CD4-positive, alpha-beta T cell (primary cell): ENCODE measurements at regions of chr1 and their contacts with region 1.

Region 1: DNA sequence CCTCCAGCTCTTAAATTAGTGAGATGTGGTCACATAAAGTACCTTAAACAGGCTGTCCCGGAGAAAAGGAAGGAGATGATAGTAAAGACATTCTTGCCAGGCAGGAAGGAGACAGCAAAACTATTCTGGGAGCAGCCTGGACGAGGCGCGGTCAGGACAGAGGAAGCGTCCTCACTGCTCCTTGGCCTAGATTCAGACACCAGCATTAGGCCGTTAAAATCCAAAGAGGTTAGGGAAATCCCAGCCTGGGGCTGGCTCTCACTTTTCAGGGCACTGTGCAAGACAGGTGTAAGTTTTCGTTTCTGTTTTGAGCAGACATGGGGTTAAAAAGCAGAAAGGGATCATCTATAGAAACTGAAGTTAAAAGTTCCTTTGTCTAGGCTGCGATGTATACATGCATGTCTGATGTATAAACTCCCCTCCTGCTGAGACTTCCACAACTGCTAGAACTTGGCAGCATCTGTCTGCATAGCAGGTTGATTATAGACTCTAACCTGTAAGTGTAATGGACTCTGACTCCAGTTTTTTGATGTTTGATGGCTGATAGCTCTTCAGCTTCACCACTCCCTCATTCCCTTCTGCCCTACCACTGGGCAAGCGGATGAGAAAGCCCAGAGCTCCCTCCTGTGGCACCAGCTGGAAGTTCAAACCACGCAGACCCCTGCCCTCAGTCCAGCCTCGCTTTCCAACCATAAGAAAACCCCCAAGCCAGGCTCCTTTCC is 21.5 kb downstream of the STPG1 start:
- DNase-seq: peak; percentile 44 to 84 (median 55)
- ATAC-seq: peak; percentile 79
- H3K4me3 ChIP-seq: peak overlapping the region; percentile 32
- H3K4me3 Mint-ChIP-seq: peak overlapping the region; percentile 52
- H3K27ac ChIP-seq: peak overlapping the region; percentile 63 to 78
- H3K27ac Mint-ChIP-seq: peak overlapping the region; percentile 85
- H3K4me1 ChIP-seq: peaks cover 29% of the 10 kb centered on the region
- H3K4me1 Mint-ChIP-seq: peaks cover 42% of the 10 kb centered on the region
- H3K27me3 ChIP-seq: no peaks in the 10 kb centered on the region
- H3K27me3 Mint-ChIP-seq: no peaks in the 10 kb centered on the region
- CTCF ChIP-seq: peak; percentile 75

Region 2: GRCh38 chr1:24070821-24071393 is 321.1 kb before region 1 on chr1:
- CTCF ChIA-PET with region 1: no interaction called
- POLR2A ChIA-PET with region 1: no interaction called
- intact Hi-C with region 1: loop called in 1 of 2 experiments (anchors 5 kb)
- DNase-seq: peak; percentile 52 to 83 (median 61)
- ATAC-seq: peak; percentile 88
- H3K4me3 ChIP-seq: no peak overlapping the region
- H3K4me3 Mint-ChIP-seq: no peak overlapping the region
- H3K27ac ChIP-seq: no peak overlapping the region
- H3K27ac Mint-ChIP-seq: no peak overlapping the region
- H3K4me1 ChIP-seq: peaks cover 6% of the 10 kb centered on the region
- H3K4me1 Mint-ChIP-seq: no peaks in the 10 kb centered on the region
- H3K27me3 ChIP-seq: no peaks in the 10 kb centered on the region
- H3K27me3 Mint-ChIP-seq: peaks cover 10% of the 10 kb centered on the region
- CTCF ChIP-seq: peak; percentile 94

Region 3: DNA sequence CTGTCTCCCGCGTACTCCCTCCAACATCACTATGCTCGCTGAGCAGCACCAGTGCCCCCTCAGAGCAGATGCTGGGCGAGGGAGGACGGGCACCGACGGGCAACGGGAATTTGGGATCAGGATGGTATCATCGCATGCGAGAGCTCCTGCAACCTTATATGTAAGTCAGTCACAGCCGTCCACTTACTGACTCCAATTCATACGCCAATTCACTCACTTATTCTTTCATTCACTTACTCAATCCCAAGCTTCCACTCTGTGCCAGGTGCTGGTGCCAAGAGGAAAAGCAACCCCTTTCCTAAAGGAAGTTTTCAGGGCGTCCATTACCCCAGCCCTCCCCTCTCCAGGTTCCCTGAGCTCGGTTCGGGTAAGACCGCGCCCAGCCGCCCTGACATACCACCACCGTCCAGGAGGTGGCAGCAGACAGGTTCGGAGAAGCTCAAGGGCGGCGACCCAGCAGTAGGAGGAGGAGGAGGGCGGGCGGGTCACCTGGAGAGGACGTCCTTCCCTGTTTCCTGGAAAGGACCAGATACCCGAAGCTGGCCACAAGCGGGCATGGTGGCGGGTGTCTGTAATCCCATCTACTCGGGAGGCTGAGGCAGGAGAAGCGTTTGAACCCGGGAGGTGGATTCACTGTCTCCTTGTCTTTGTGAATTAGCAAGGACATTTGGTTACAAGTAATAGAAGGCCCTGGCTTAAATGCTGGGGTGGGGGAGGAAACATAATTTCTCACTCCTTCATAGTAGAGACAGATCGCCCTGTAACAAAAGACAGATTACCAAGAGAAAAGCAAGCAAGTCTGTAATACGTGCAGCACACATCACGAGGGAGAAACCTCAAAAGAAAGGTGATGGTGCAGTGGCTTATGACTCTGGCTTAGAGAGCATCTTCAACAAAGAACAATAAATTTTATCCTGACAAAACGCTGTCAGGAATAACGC is 241.5 kb before region 1 on chr1:
- CTCF ChIA-PET with region 1: interaction called, 21 read pairs
- POLR2A ChIA-PET with region 1: interaction called, 3 read pairs
- intact Hi-C with region 1: loop called (anchors 1 kb)
- DNase-seq: peak; percentile 76 to 91 (median 87)
- ATAC-seq: peak; percentile 98
- H3K4me3 ChIP-seq: peak overlapping the region; percentile 31
- H3K4me3 Mint-ChIP-seq: peak overlapping the region; percentile 44
- H3K27ac ChIP-seq: no peak overlapping the region
- H3K27ac Mint-ChIP-seq: no peak overlapping the region
- H3K4me1 ChIP-seq: peaks cover 12% of the 10 kb centered on the region
- H3K4me1 Mint-ChIP-seq: peaks cover 11% of the 10 kb centered on the region
- H3K27me3 ChIP-seq: peaks cover 11 to 23% of the 10 kb centered on the region in 2 experiments
- H3K27me3 Mint-ChIP-seq: peaks cover 46% of the 10 kb centered on the region
- CTCF ChIP-seq: peak; percentile 87

Region 4: DNA sequence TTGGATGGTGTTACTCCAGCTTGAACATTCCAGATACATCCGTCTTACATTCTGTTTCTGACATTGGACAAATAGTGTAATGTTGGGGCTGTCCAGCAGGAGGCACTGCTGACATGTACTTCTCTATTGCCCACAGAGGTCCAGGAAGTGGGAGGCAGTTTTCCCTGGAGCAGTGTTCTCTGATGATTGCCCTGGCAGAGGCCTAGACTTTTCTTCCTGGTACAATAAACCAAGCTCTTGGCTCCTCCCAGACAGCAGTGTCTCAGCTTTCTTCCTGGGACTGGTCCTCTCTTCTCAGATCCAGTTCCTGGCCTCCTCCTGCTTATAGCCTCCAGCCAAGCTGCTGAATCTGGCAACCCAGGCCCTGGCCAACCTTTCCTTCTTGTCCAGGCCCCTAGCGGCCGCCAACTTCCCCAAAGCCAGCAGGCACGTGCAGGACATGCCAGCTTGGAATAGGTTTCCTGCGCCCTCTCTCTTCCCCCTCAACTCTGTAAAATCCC is 190.1 kb before region 1 on chr1:
- CTCF ChIA-PET with region 1: interaction called, 126 read pairs
- POLR2A ChIA-PET with region 1: interaction called, 68 read pairs
- intact Hi-C with region 1: loop called (anchors 1 kb)
- DNase-seq: peak; percentile 30 to 76 (median 47)
- ATAC-seq: peak; percentile 43
- H3K4me3 ChIP-seq: no peak overlapping the region
- H3K4me3 Mint-ChIP-seq: no peak overlapping the region
- H3K27ac ChIP-seq: no peak overlapping the region
- H3K27ac Mint-ChIP-seq: no peak overlapping the region
- H3K4me1 ChIP-seq: peaks cover 8% of the 10 kb centered on the region
- H3K4me1 Mint-ChIP-seq: peaks cover 6% of the 10 kb centered on the region
- H3K27me3 ChIP-seq: peaks cover 0 to 8% of the 10 kb centered on the region in 2 experiments
- H3K27me3 Mint-ChIP-seq: no peaks in the 10 kb centered on the region
- CTCF ChIP-seq: peak; percentile 77

Region 5: DNA sequence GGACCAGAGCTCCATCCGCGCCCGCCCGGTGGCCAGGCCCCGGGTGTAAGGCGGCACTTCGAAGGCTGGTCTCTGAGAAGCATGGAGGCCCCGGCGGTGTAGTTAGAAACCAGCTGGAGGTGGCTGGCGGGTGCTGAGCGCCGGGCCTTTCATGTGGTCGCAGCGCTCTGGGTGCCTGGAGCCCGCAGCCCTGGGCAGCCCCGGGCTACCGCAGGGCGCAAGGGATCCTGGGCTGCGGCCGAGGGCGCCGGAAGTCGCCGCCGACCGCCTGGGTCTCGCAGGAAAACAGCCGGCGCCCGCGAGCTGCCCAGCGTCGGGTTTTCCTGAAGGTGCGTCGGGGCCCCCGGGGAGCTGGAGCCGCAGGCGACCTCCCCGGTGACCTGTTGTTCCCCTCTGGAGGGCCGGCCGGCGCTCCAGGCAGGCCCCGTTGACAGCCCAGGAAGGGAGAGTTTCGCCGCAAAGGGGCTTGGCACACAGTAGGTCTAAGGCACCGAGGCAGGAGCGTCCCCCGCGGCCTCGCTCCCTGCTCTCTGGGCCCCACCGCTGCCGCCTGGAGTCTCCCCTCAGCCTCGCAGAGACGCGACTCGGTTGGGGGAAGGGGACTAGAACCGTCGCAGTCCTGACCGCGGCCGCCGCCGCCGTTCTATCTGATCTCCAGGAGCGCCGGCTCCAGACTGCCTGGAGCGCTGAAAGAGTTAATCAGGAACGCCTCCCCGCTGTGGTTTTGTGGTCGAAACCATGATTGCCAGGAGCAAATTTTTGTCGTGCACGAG is 70.2 kb before region 1 on chr1:
- CTCF ChIA-PET with region 1: interaction called, 10 read pairs
- POLR2A ChIA-PET with region 1: interaction called, 7 read pairs
- intact Hi-C with region 1: loop called in 1 of 2 experiments (anchors 5 kb)
- DNase-seq: peak; percentile 33 to 89 (median 56)
- ATAC-seq: peak; percentile 72
- H3K4me3 ChIP-seq: peak overlapping the region; percentile 58
- H3K4me3 Mint-ChIP-seq: peak overlapping the region; percentile 65
- H3K27ac ChIP-seq: no peak overlapping the region
- H3K27ac Mint-ChIP-seq: no peak overlapping the region
- H3K4me1 ChIP-seq: peaks cover 46% of the 10 kb centered on the region
- H3K4me1 Mint-ChIP-seq: peaks cover 56% of the 10 kb centered on the region
- H3K27me3 ChIP-seq: peaks cover 20 to 29% of the 10 kb centered on the region in 2 experiments
- H3K27me3 Mint-ChIP-seq: peaks cover 37% of the 10 kb centered on the region
- CTCF ChIP-seq: no peak

Region 6: DNA sequence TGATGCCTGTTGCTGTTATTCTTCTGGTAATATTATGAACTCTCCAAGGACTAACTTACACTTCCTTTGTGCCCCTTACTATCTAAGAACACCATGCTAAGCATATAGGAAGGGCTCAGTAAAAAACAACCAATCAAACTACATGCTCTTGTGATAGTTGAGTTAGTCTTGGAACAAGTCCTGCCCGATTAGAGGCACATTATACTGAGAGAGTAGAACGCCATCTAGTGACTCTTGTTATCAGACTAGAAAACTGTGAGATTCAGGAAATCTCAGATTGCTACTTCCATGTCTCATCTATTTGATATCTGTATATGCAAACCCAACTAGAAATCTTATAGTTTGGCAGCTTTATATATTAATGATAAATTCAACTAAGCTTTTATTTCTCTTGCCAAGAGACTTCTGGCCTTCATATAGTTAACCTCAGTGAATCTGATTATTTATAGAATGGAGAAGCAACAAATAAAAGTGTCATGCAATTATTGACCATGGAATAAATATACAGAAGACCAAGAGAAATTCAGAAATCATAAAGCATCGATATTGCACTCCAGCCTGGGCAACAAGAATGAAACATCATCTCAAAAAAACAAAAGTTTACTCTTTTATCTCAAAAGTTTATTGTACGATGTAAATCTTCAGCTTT is 243.3 kb after region 1 on chr1:
- CTCF ChIA-PET with region 1: interaction called, 3 read pairs
- POLR2A ChIA-PET with region 1: no interaction called
- intact Hi-C with region 1: loop called (anchors 2 to 5 kb)
- DNase-seq: peak in 3 of 14 experiments; percentile 69 to 75 (median 74)
- ATAC-seq: peak; percentile 89
- H3K4me3 ChIP-seq: no peak overlapping the region
- H3K4me3 Mint-ChIP-seq: no peak overlapping the region
- H3K27ac ChIP-seq: no peak overlapping the region
- H3K27ac Mint-ChIP-seq: no peak overlapping the region
- H3K4me1 ChIP-seq: no peaks in the 10 kb centered on the region
- H3K4me1 Mint-ChIP-seq: peaks cover 9% of the 10 kb centered on the region
- H3K27me3 ChIP-seq: peaks cover 0 to under 1% of the 10 kb centered on the region in 2 experiments
- H3K27me3 Mint-ChIP-seq: peaks cover 11% of the 10 kb centered on the region
- CTCF ChIP-seq: peak; percentile 76

Region 7: GRCh38 chr1:24830680-24831272 is 438.7 kb after region 1 on chr1:
- CTCF ChIA-PET with region 1: interaction called, 3 read pairs
- POLR2A ChIA-PET with region 1: no interaction called
- intact Hi-C with region 1: loop called (anchors 5 to 10 kb)
- DNase-seq: peak in 3 of 14 experiments; percentile 65 to 75 (median 73)
- ATAC-seq: peak; percentile 44
- H3K4me3 ChIP-seq: no peak overlapping the region
- H3K4me3 Mint-ChIP-seq: no peak overlapping the region
- H3K27ac ChIP-seq: no peak overlapping the region
- H3K27ac Mint-ChIP-seq: no peak overlapping the region
- H3K4me1 ChIP-seq: no peaks in the 10 kb centered on the region
- H3K4me1 Mint-ChIP-seq: no peaks in the 10 kb centered on the region
- H3K27me3 ChIP-seq: no peaks in the 10 kb centered on the region
- H3K27me3 Mint-ChIP-seq: peaks cover 5% of the 10 kb centered on the region
- CTCF ChIP-seq: peak; percentile 91